GM12878 (cell line): ENCODE measurements at regions of chr5 and their contacts with region 1.

Region 1: GRCh38 chr5:132386644-132387286 is 17.3 kb downstream of the SLC22A5 start:
- DNase-seq: peak; percentile 70
- ATAC-seq: peak; percentile 96
- H3K4me3 ChIP-seq: no peak overlapping the region
- H3K27ac ChIP-seq: no peak overlapping the region
- H3K4me1 ChIP-seq: peaks cover 20% of the 10 kb centered on the region
- H3K27me3 ChIP-seq: no peaks in the 10 kb centered on the region
- CTCF ChIP-seq: peak; percentile 86 to 97 (median 93)
- EP300 ChIP-seq: no peak
- POLR2A ChIP-seq: no peak
- RAD21 ChIP-seq: peak; percentile 91

Region 2: DNA sequence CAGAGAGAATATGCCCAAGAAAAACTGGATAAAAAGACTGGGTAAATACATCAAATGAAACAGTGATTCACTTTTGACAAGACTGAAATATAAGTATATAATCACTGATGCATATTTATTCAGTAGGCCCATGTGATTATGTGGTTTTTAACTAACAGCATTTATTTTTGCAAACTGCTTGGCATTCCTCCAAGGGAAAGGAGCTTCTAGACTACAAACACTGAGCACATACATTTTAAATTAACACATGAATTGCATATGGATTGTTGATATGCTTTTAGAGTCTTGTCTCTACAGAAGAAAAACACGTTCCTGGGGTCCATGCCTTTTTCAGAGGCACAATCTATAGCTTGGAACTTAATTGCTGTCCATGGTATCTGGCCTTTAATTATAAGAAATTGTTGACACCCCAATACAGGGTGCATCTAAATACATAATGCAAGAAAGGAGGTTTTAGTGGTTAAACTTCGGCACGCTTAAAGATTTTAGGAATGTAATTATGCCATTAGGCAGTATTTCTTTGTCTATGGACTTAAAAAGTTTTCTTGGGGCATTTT is 434.4 kb before region 1 on chr5:
- CTCF ChIA-PET with region 1: no interaction called
- POLR2A ChIA-PET with region 1: no interaction called
- RAD21 ChIA-PET with region 1: no interaction called
- SMC1A ChIA-PET with region 1: no interaction called
- in situ Hi-C with region 1: no loop called
- intact Hi-C with region 1: no loop called
- DNase-seq: no peak
- ATAC-seq: no peak
- H3K4me3 ChIP-seq: no peak overlapping the region
- H3K27ac ChIP-seq: no peak overlapping the region
- H3K4me1 ChIP-seq: no peaks in the 10 kb centered on the region
- H3K27me3 ChIP-seq: peaks cover 0 to 2% of the 10 kb centered on the region in 2 experiments; a peak in 3 of 4 replicates
- CTCF ChIP-seq: no peak
- EP300 ChIP-seq: no peak
- POLR2A ChIP-seq: no peak
- RAD21 ChIP-seq: no peak

Region 3: DNA sequence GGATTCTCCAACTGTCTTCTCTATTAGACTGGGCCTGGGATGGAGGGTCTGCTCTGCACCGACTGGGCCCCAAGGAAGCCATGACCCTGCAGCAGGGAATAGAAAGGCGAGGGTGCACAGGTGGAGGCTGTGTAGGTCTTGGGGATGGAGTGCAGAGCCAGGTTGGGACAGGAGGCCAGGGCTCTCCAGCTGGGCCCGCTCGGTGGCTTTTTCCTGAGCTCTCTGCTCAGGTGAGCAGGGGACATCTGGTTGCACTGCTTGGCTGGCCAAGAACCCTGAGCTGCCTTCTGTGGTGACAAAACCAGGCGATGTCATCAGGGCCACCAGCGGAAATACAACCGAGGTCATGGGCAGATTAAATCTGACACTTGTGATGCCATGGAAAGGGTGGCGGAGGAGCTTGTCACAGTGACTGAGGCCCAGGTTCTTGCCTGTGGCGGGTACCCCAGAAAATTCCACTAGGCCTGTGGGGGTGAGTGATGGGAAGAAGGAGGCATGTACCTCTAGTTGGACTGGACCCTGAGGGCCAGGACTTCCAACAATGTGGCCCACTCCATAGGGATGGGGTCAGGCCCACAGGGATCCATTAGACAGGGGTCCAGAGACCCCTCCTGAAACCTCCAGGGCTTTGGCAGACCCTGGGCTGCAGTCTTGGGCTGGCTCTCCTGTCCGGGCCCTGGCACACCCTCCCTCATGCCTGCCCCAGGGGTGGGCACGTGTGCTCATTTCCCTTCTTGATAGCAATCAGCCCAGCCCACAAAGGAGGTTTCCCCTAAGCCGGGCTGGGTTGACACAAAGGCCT is 330.8 kb before region 1 on chr5:
- CTCF ChIA-PET with region 1: no interaction called
- POLR2A ChIA-PET with region 1: no interaction called
- RAD21 ChIA-PET with region 1: no interaction called
- SMC1A ChIA-PET with region 1: no interaction called
- in situ Hi-C with region 1: no loop called
- intact Hi-C with region 1: no loop called
- DNase-seq: no peak
- ATAC-seq: peak; percentile 24; the same call in 2 of the 3 replicates
- H3K4me3 ChIP-seq: no peak overlapping the region
- H3K27ac ChIP-seq: no peak overlapping the region
- H3K4me1 ChIP-seq: no peaks in the 10 kb centered on the region
- H3K27me3 ChIP-seq: peaks cover 0 to 2% of the 10 kb centered on the region in 2 experiments; a peak in 3 of 4 replicates
- CTCF ChIP-seq: no peak
- EP300 ChIP-seq: no peak
- POLR2A ChIP-seq: no peak
- RAD21 ChIP-seq: no peak

Region 4: DNA sequence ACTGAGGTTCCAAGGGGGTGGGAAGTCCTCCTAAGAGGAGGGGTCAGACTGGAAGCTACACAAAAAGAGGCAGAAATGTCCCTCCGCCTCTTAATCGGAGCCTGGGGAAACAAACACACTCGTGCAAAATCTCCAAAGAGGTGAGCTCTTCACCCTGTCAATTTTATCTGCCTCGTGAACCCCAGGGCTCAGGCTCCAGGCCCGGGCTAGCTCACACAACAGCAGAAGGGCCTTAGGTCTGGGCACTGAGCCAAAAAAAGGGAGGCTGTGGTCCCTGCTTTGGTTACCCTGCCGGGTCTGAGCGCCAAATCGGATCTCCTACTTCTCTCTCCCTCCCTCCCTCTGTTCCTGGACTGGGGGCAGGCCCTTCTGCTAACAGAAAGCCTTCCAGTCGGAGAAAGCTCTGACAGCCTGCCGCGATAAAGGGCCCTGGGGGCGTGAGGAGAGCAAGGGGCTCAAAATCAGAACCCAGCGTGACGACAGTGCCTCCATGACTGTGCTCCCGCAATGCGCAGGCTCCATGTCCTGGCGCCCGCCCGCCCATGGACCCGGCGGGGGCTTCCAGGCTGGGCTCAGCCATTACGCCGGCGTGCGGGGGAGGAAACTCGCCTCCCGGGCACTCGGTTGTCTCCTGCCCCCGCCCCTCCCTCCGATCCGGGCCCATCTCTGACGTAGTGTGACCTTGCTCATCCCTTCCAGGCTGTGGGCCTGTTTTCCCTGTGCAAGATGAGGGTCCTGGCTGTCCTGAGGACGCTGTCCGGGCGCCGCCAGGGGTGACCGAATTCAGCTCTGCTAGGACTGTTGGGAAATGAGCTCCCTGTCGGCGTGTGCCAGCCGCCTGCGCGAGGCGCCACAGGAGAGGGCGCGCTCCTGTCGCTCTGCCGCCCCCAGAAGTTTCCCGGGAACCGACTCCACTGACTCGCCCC is 93.4 kb before region 1 on chr5:
- CTCF ChIA-PET with region 1: interaction called, 3 read pairs
- POLR2A ChIA-PET with region 1: interaction called, 3 read pairs
- RAD21 ChIA-PET with region 1: interaction called, 12 read pairs
- SMC1A ChIA-PET with region 1: no interaction called
- in situ Hi-C with region 1: no loop called
- intact Hi-C with region 1: no loop called
- DNase-seq: no peak
- ATAC-seq: peak; percentile 67
- H3K4me3 ChIP-seq: peak overlapping the region; percentile 70
- H3K27ac ChIP-seq: no peak overlapping the region
- H3K4me1 ChIP-seq: peaks cover 21% of the 10 kb centered on the region
- H3K27me3 ChIP-seq: peaks cover 5 to 25% of the 10 kb centered on the region in 2 experiments; a peak in 3 of 4 replicates
- CTCF ChIP-seq: peak in 2 of 3 experiments; percentile 10 to 18; a peak in 2 of 6 replicates
- EP300 ChIP-seq: no peak
- POLR2A ChIP-seq: peak; percentile 60; the same call in 1 of the 2 replicates
- RAD21 ChIP-seq: no peak

Region 5: GRCh38 chr5:132303589-132303988 is 83.2 kb before region 1 on chr5:
- CTCF ChIA-PET with region 1: no interaction called
- POLR2A ChIA-PET with region 1: no interaction called
- RAD21 ChIA-PET with region 1: no interaction called
- SMC1A ChIA-PET with region 1: no interaction called
- in situ Hi-C with region 1: no loop called
- intact Hi-C with region 1: no loop called
- DNase-seq: no peak
- ATAC-seq: no peak
- H3K4me3 ChIP-seq: no peak overlapping the region
- H3K27ac ChIP-seq: no peak overlapping the region
- H3K4me1 ChIP-seq: no peaks in the 10 kb centered on the region
- H3K27me3 ChIP-seq: peaks cover 0 to 2% of the 10 kb centered on the region in 2 experiments; a peak in 2 of 4 replicates
- CTCF ChIP-seq: no peak
- EP300 ChIP-seq: no peak
- POLR2A ChIP-seq: no peak
- RAD21 ChIP-seq: no peak

Region 6: DNA sequence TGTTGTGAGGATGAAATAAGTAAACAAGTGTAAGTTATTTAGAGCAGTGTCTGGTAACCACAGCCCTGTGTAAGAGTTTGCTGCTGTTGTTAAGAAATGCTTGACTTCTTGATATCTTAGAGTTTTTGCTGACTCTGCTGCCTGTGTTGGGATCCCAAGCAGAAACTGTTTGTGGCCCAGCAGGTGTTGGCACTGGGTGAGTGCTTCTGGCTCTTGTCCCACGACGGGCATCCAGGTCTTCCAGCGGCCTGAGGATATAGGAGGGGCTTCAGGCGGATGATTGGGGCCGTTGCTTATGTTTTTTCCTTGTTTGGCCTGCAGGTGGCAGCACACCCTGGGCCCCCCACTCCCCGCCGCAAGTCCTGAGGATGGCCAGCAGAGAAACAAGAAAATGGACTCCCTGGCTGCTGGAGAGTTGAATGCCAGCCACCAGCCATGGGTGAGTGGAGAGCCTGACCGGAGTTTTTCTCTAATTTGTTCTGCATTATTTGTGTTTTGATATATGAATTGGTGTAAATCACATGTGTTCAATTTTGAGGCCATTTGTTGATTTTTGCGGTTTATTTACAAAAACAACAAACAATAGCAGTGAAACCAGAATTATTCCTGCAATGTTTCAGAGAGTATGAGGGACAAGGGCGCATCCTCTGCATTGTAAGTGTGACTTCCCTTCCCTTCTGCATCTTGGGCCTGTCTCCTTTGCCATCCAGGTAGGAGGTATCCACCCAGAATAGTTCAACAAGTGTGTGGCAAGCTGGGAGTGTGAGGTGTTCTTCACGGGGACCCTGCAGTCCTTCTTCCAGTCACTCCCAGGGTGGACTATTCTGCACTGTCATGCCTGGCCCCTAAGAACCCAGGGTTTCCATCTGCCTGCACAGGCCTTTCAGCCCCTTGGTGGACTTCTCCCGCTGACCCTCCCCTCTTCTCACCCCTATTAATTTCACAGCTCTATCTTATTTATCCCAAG is 33.0 kb after region 1 on chr5:
- CTCF ChIA-PET with region 1: interaction called, 19 read pairs
- POLR2A ChIA-PET with region 1: interaction called, 4 read pairs
- RAD21 ChIA-PET with region 1: interaction called, 21 read pairs
- SMC1A ChIA-PET with region 1: interaction called, 14 read pairs
- in situ Hi-C with region 1: no loop called
- intact Hi-C with region 1: no loop called
- DNase-seq: no peak
- ATAC-seq: peak; percentile 50
- H3K4me3 ChIP-seq: peak overlapping the region; percentile 31; the same call in 1 of the 2 replicates
- H3K27ac ChIP-seq: peak overlapping the region; percentile 94
- H3K4me1 ChIP-seq: peaks cover 79% of the 10 kb centered on the region
- H3K27me3 ChIP-seq: no peaks in the 10 kb centered on the region
- CTCF ChIP-seq: peak; percentile 74 to 81 (median 80)
- EP300 ChIP-seq: no peak
- POLR2A ChIP-seq: no peak
- RAD21 ChIP-seq: peak; percentile 78

Region 7: GRCh38 chr5:132490486-132491367 is 104.0 kb after region 1 on chr5 and contains the start of gene IRF1:
- CTCF ChIA-PET with region 1: interaction called, 481 read pairs
- POLR2A ChIA-PET with region 1: interaction called, 15 read pairs
- RAD21 ChIA-PET with region 1: interaction called, 279 read pairs
- SMC1A ChIA-PET with region 1: interaction called, 340 read pairs
- in situ Hi-C with region 1: loop called (anchors 10 kb)
- intact Hi-C with region 1: no loop called
- DNase-seq: no peak
- ATAC-seq: peak; percentile 80
- H3K4me3 ChIP-seq: peak within 1 kb of the TSS; percentile 98
- H3K27ac ChIP-seq: peak within 1 kb of the TSS; percentile 97
- H3K4me1 ChIP-seq: peaks cover 52% of the 10 kb centered on the region
- H3K27me3 ChIP-seq: no peaks in the 10 kb centered on the region
- CTCF ChIP-seq: 0 out of 6 replicates have a peak, but pooled peaks of 2 of the 3 experiments have one; percentile 3 to 7
- EP300 ChIP-seq: 0 out of 4 replicates have a peak, but pooled peaks of 1 of the 2 experiments have one; percentile 1
- POLR2A ChIP-seq: peak; percentile 94
- RAD21 ChIP-seq: 0 out of 2 replicates have a peak, but pooled peaks have one; percentile 0
- polyA plus RNA-seq, gene IRF1: 6.9 to 14.0 TPM

Region 8: DNA sequence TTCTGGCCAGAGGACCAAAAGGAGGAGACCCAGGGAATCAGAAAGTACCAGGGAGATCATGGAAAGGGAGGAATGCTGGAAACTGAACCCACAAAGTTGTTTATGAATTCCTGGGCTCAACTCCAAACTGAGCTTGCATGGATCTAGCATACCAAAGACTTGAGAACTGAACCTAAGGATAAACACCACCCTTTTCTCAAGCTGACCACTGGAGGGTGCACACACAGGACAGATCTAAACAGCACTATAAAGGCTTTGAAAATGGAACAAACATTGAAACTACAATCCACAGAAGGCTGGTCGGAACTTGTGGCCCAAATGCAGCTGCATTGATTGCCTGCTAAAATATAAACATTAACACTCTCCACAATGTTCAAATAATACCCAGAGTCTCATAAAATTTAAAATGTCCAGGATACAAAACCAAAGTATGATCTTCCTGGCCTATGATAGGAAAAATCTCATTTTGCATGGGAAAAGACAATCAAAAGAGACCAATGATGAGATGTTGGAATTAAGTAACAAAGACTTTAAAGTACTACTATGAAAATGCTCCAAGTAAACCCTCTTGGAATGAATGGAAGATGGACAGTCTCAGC is 119.4 kb after region 1 on chr5:
- CTCF ChIA-PET with region 1: interaction called, 481 read pairs
- POLR2A ChIA-PET with region 1: interaction called, 16 read pairs
- RAD21 ChIA-PET with region 1: interaction called, 279 read pairs
- SMC1A ChIA-PET with region 1: interaction called, 340 read pairs
- in situ Hi-C with region 1: no loop called
- intact Hi-C with region 1: loop called (anchors 1 kb)
- DNase-seq: no peak
- ATAC-seq: peak; percentile 89
- H3K4me3 ChIP-seq: no peak overlapping the region
- H3K27ac ChIP-seq: no peak overlapping the region
- H3K4me1 ChIP-seq: peaks cover 14% of the 10 kb centered on the region
- H3K27me3 ChIP-seq: no peaks in the 10 kb centered on the region
- CTCF ChIP-seq: peak; percentile 69 to 77 (median 74)
- EP300 ChIP-seq: no peak
- POLR2A ChIP-seq: no peak
- RAD21 ChIP-seq: peak; percentile 81